ENCODE measurements at regions of chr4 and their contacts with region 1.

Region 1: DNA sequence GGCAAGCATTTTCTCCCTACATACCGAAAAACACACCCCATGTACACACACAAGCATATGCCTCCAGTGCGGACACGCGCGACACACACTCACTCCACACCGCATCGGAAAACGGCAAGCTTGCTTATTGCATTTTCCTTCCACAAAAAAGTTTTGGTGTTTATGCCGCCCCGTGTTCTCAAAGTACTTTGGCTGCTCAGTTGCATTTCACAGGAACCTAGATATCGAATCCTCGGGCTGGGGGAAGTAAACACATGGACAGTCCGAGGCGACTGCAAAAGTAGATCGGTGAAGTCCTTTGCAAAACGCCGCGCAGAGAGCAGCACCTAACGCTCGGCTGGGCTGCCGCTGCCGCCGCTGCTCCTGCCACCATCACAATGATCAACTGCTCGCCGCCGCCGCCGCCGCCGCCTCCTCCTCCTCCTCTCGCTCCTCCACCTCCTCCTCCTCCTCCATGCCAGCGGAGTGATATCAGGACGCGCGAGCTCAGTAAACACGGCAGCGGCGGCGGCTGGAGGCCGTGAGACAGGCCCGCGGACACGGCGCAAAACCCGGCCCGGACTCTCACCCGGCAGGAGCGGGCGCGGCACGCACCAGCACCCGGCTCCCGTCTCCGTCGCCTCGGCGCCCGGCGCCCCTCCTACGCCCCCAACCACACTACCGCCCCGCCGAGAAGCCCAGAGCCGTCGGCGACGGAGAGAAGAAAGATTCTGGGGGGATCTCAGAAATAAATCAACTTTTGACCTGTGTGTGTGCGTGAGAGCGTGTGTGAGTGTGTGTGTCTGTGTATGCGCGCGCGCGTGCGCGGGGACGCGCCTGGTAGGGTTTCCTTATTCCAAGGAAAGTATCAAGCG is at the start of gene MAML3:
- DNase-seq: peak; percentile 95
- H3K4me3 ChIP-seq: peak within 1 kb of the TSS; percentile 79
- H3K27ac ChIP-seq: peak within 1 kb of the TSS; percentile 99
- H3K4me1 ChIP-seq: no peaks in the 10 kb centered on the region
- H3K27me3 ChIP-seq: no peaks in the 10 kb centered on the region
- CTCF ChIP-seq: no peak
- total RNA-seq, gene MAML3: 9.3 to 10.1 TPM

Region 2: GRCh38 chr4:139734875-139735380 is 419.0 kb before region 1 on chr4:
- intact Hi-C with region 1: loop called (anchors 5 kb)
- DNase-seq: peak; percentile 71
- H3K4me3 ChIP-seq: peak overlapping the region; percentile 33
- H3K27ac ChIP-seq: no peak overlapping the region
- H3K4me1 ChIP-seq: no peaks in the 10 kb centered on the region
- H3K27me3 ChIP-seq: no peaks in the 10 kb centered on the region
- CTCF ChIP-seq: peak; percentile 57

Region 3: DNA sequence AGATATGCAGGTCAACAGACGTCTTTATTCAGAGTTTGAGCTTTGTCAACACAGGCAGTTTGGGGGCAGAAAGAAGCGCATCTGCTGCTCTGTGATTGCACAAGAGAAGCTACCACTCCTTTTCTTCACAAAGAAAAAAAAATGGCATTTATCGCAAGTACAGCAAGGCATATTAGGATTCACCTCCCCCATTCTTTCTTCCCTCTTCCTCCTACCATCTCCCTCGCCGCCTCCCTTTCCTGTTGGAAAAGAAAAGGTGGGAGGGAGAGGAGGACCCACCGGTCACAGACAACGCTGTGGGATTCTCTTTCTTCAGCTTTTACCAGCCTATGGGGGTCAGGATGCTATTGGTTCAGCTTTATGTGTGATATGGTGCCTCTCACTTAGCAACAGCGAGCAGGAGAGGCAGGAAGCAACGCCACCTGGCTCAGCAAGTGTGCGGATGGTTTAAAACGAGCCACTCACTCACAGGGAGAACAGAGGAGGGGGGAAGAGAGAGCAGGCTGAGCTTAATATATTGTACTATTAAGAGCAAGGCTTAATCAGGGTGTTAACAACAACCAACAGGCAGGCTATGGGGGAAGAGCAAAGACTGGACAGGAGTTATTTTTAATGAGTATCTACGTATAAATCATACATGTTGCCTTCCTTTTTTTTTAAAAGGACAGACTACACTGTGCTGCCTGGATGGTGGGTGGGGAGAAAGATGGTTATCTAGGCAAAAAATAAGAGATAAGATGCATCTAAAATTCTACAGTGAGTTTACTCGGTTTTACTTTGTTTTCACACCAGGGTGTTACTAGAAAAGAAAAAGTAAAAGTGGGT is 104.7 kb before region 1 on chr4:
- intact Hi-C with region 1: loop called (anchors 5 kb)
- DNase-seq: peak; percentile 73
- H3K4me3 ChIP-seq: peak overlapping the region; percentile 31
- H3K27ac ChIP-seq: peak overlapping the region; percentile 84
- H3K4me1 ChIP-seq: peaks cover 13% of the 10 kb centered on the region
- H3K27me3 ChIP-seq: no peaks in the 10 kb centered on the region
- CTCF ChIP-seq: no peak

Region 4: GRCh38 chr4:140237606-140237986 is 83.7 kb after region 1 on chr4:
- intact Hi-C with region 1: loop called (anchors 5 kb)
- DNase-seq: peak; percentile 80
- H3K4me3 ChIP-seq: no peak overlapping the region
- H3K27ac ChIP-seq: peak overlapping the region; percentile 93
- H3K4me1 ChIP-seq: peaks cover 24% of the 10 kb centered on the region
- H3K27me3 ChIP-seq: no peaks in the 10 kb centered on the region
- CTCF ChIP-seq: no peak